ENCODE measurements at regions of chr15 and their contacts with region 1.

Region 1: DNA sequence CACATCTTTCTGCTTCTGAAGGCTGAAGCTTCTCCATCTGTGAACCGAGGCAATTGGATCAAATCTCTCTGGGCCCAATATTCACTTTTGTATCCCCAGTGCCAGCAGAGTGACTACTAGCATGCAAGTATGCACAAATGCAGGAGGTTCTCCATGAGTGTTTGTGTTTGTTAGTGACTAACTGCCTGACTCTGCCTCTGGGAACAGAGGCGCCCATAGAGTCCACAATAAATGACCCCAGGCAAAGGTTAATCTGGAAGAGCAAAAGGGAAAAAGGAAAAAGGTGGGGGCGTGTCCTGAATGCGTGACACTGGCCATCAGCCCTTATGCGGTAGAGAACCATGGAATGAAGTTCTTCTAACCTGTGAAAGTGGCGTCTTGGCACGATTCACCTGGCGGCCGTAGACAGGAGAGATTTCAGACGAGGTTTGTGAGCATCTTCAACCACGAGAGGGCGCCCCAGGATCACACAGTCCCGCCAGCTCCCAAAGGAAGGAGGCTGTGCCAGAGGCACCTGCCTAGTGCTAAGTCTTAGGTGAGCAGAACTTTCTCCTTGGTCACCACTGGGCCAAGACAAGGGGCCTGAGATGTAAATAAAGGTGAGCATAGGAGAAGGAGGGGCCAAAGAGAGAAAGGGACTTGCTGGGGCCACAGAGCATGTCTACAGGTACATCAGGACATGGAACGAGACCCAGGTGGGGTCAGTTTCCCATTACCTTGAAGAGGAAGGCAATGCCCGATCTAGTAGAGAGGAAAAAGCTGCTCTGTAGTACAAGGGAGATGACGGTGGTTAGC is 44.2 kb downstream of the RBPMS2 start:
- DNase-seq: peak; percentile 80
- CTCF ChIP-seq: peak; percentile 86

Region 2: DNA sequence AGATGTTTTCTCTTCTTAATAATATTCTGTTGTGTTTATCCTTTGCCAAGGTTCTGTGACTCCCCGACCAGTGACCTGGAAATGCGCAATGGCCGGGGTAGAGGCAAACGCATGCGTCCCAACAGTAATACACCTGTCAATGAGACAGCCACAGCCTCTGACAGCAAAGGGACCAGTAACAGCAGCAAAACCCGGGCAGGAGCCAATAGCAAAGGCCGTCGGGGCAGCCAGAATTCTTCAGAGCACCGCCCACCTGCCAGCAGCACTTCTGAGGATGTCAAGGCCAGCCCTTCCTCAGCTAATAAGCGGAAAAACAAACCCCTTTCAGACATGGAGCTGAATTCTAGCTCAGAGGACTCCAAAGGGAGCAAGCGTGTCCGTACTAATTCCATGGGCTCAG is 57.3 kb before region 1 on chr15:
- CTCF ChIA-PET with region 1: interaction called, 34 read pairs
- POLR2A ChIA-PET with region 1: no interaction called
- DNase-seq: no peak
- CTCF ChIP-seq: no peak

Region 3: DNA sequence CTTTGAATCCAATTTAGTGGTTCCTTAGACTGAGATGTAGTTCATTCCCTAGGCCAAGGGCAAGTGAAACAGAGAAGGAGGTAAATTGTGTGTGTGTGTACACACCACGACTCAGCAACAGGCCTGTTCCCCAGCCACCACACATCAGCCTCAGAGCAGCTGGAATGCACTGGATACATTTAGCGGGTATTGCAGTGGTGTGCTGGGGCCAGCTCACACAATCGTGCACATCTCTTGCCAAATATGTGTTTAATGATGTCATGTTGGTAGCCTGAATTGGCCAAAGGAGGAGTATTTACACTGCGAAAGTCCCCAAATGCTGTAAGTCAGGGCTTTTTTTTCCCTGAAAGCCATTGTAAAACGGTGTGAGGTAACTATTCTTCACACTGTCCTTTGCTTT is 38.1 kb before region 1 on chr15:
- CTCF ChIA-PET with region 1: interaction called, 151 read pairs
- POLR2A ChIA-PET with region 1: no interaction called
- DNase-seq: no peak
- CTCF ChIP-seq: no peak

Region 4: GRCh38 chr15:64717735-64718495 is 13.3 kb before region 1 on chr15:
- CTCF ChIA-PET with region 1: interaction called, 39 read pairs
- POLR2A ChIA-PET with region 1: no interaction called
- DNase-seq: no peak
- CTCF ChIP-seq: no peak

Region 5: DNA sequence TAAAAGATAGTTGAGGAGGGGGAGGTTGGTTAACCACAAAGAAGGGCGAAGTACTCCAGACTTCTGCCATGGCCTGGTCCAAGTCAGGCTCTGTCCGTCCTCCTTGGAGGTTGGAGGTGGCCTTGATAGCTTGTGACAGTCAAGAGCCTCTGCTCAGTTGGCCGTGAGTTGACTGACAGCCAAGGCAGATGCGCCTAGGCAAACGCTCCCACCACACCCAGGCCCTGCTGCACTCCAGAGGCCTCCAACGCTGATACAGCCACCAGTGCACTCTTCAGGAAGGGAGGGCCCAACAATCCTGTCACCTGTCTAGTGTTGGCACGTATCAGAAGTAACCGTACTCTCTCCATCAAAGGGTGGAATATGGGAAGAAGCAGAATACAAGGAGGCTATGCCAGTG is 34.8 kb after region 1 on chr15:
- CTCF ChIA-PET with region 1: interaction called, 10 read pairs
- POLR2A ChIA-PET with region 1: no interaction called
- DNase-seq: no peak
- CTCF ChIP-seq: no peak

Region 6: GRCh38 chr15:64905119-64905831 is 174.1 kb after region 1 on chr15:
- CTCF ChIA-PET with region 1: interaction called, 52 read pairs
- POLR2A ChIA-PET with region 1: no interaction called
- DNase-seq: peak; percentile 85
- CTCF ChIP-seq: peak; percentile 93